ENCODE measurements at regions of chr17 and their contacts with region 1.

Region 1: GRCh38 chr17:72318131-72318530 is 197.3 kb downstream of the SOX9 start:
- DNase-seq: no peak
- H3K4me3 ChIP-seq: no peak overlapping the region
- H3K27ac ChIP-seq: no peak overlapping the region
- H3K4me1 ChIP-seq: no peaks in the 10 kb centered on the region
- H3K27me3 ChIP-seq: no peaks in the 10 kb centered on the region
- CTCF ChIP-seq: no peak

Region 2: GRCh38 chr17:72205357-72205756 is 112.8 kb before region 1 on chr17:
- CTCF ChIA-PET with region 1: no interaction called
- dilution Hi-C with region 1: no loop called
- in situ Hi-C with region 1: no loop called
- intact Hi-C with region 1: no loop called
- DNase-seq: no peak
- H3K4me3 ChIP-seq: no peak overlapping the region
- H3K27ac ChIP-seq: no peak overlapping the region
- H3K4me1 ChIP-seq: no peaks in the 10 kb centered on the region
- H3K27me3 ChIP-seq: no peaks in the 10 kb centered on the region
- CTCF ChIP-seq: no peak

Region 3: DNA sequence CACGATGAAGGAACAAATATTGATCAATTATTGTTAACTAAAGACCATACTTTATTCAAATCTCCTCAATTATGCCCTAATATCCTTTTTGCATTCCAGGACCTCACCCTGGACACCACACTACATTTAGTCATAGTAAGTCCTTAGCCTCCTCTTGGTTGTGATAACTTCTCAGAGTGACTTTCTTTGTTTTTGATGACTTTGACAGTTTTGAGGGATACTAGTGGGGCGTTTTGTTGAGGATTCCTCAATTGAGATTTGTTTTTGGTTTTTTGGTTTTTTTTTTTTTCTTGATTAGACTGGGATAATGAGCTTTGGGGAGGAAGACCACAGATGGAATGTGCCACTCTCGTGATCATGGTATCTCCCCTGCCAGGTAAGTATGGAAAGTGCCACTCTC is 91.8 kb before region 1 on chr17:
- CTCF ChIA-PET with region 1: no interaction called
- dilution Hi-C with region 1: no loop called
- in situ Hi-C with region 1: no loop called
- intact Hi-C with region 1: no loop called
- DNase-seq: no peak
- H3K4me3 ChIP-seq: no peak overlapping the region
- H3K27ac ChIP-seq: no peak overlapping the region
- H3K4me1 ChIP-seq: no peaks in the 10 kb centered on the region
- H3K27me3 ChIP-seq: peaks cover under 1% of the 10 kb centered on the region
- CTCF ChIP-seq: no peak

Region 4: GRCh38 chr17:72236915-72237633 is 81.1 kb before region 1 on chr17:
- CTCF ChIA-PET with region 1: no interaction called
- dilution Hi-C with region 1: loop called (anchors 5 kb)
- in situ Hi-C with region 1: no loop called
- intact Hi-C with region 1: no loop called
- DNase-seq: no peak
- H3K4me3 ChIP-seq: no peak overlapping the region
- H3K27ac ChIP-seq: no peak overlapping the region
- H3K4me1 ChIP-seq: no peaks in the 10 kb centered on the region
- H3K27me3 ChIP-seq: no peaks in the 10 kb centered on the region
- CTCF ChIP-seq: no peak

Measured in mammary epithelial cell (primary cell).